ENCODE measurements at regions of chr5 and their contacts with region 1.

Region 1: GRCh38 chr5:90264689-90265544 is 144.6 kb downstream of the CETN3 start:
- DNase-seq: peak; percentile 70 to 77
- H3K4me3 ChIP-seq: no peak overlapping the region
- H3K4me3 Mint-ChIP-seq: no peak overlapping the region
- H3K27ac Mint-ChIP-seq: no peak overlapping the region
- H3K4me1 ChIP-seq: 0 out of 2 replicates have a peak, but pooled peaks cover 10% of the 10 kb centered on the region
- H3K4me1 Mint-ChIP-seq: no peaks in the 10 kb centered on the region
- H3K27me3 ChIP-seq: no peaks in the 10 kb centered on the region
- H3K27me3 Mint-ChIP-seq: no peaks in the 10 kb centered on the region
- CTCF ChIP-seq: peak; percentile 92 to 93

Region 2: GRCh38 chr5:89277816-89278215 is 987.1 kb before region 1 on chr5:
- CTCF ChIA-PET with region 1: no interaction called
- POLR2A ChIA-PET with region 1: no interaction called
- intact Hi-C with region 1: loop called (anchors 10 kb)
- DNase-seq: no peak
- H3K4me3 ChIP-seq: no peak overlapping the region
- H3K4me3 Mint-ChIP-seq: no peak overlapping the region
- H3K27ac Mint-ChIP-seq: no peak overlapping the region
- H3K4me1 ChIP-seq: peaks cover 15% of the 10 kb centered on the region; the same call in 1 of the 2 replicates
- H3K4me1 Mint-ChIP-seq: peaks cover 19% of the 10 kb centered on the region
- H3K27me3 ChIP-seq: no peaks in the 10 kb centered on the region
- H3K27me3 Mint-ChIP-seq: peaks cover 3% of the 10 kb centered on the region
- CTCF ChIP-seq: no peak

Region 3: GRCh38 chr5:89849830-89850512 is 414.9 kb before region 1 on chr5:
- CTCF ChIA-PET with region 1: no interaction called
- POLR2A ChIA-PET with region 1: no interaction called
- intact Hi-C with region 1: loop called (anchors 10 kb)
- DNase-seq: no peak
- H3K4me3 ChIP-seq: no peak overlapping the region
- H3K4me3 Mint-ChIP-seq: no peak overlapping the region
- H3K27ac Mint-ChIP-seq: no peak overlapping the region
- H3K4me1 ChIP-seq: peaks cover 7% of the 10 kb centered on the region; the same call in 1 of the 2 replicates
- H3K4me1 Mint-ChIP-seq: peaks cover 7% of the 10 kb centered on the region
- H3K27me3 ChIP-seq: no peaks in the 10 kb centered on the region
- H3K27me3 Mint-ChIP-seq: no peaks in the 10 kb centered on the region
- CTCF ChIP-seq: no peak

Region 4: GRCh38 chr5:90135779-90136378 is 129.0 kb before region 1 on chr5:
- CTCF ChIA-PET with region 1: no interaction called
- POLR2A ChIA-PET with region 1: no interaction called
- intact Hi-C with region 1: loop called (anchors 2 kb)
- DNase-seq: peak; percentile 13 to 39
- H3K4me3 ChIP-seq: no peak overlapping the region
- H3K4me3 Mint-ChIP-seq: no peak overlapping the region
- H3K27ac Mint-ChIP-seq: no peak overlapping the region
- H3K4me1 ChIP-seq: no peaks in the 10 kb centered on the region
- H3K4me1 Mint-ChIP-seq: no peaks in the 10 kb centered on the region
- H3K27me3 ChIP-seq: no peaks in the 10 kb centered on the region
- H3K27me3 Mint-ChIP-seq: no peaks in the 10 kb centered on the region
- CTCF ChIP-seq: peak; percentile 31 to 33

Region 5: DNA sequence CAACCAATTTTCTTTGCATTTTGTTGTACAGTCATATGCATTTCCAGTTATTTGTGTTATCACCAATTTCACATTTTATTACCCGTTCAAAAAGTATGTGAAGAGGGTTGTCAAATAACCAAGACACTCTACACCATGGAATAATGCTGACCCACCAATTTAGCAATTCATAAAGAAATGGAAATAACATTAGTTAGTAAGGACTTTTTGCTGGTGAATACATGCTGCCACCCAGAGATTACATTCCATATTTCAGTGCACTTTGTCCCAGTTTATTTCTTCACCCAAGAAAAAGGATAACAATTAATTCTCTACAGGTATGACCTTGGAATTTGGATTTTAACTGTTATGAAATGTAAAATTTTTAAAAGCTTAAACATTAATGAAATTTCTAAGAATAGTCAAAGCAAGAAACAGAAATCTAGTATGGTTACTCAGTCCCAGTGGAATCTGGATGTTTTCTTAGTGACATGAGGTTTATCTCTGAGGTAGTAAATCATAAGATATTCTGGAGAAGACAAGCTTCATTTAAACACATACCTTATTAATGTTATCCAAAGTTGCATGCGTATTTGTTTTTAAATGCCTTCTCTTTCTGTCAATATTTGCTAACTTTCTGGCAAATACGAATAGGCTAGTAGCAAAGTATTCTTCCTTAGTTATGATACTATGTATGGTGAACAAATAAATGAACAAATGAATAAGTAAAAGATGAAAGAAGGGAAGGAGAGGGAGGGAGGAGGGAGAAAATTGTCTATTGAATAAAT is 44.1 kb after region 1 on chr5:
- CTCF ChIA-PET with region 1: no interaction called
- POLR2A ChIA-PET with region 1: no interaction called
- intact Hi-C with region 1: loop called (anchors 1 kb)
- DNase-seq: peak in 1 of 2 experiments; percentile 52
- H3K4me3 ChIP-seq: no peak overlapping the region
- H3K4me3 Mint-ChIP-seq: no peak overlapping the region
- H3K27ac Mint-ChIP-seq: peak overlapping the region; percentile 59
- H3K4me1 ChIP-seq: peaks cover 18% of the 10 kb centered on the region
- H3K4me1 Mint-ChIP-seq: peaks cover 25% of the 10 kb centered on the region
- H3K27me3 ChIP-seq: no peaks in the 10 kb centered on the region
- H3K27me3 Mint-ChIP-seq: no peaks in the 10 kb centered on the region
- CTCF ChIP-seq: no peak

Region 6: DNA sequence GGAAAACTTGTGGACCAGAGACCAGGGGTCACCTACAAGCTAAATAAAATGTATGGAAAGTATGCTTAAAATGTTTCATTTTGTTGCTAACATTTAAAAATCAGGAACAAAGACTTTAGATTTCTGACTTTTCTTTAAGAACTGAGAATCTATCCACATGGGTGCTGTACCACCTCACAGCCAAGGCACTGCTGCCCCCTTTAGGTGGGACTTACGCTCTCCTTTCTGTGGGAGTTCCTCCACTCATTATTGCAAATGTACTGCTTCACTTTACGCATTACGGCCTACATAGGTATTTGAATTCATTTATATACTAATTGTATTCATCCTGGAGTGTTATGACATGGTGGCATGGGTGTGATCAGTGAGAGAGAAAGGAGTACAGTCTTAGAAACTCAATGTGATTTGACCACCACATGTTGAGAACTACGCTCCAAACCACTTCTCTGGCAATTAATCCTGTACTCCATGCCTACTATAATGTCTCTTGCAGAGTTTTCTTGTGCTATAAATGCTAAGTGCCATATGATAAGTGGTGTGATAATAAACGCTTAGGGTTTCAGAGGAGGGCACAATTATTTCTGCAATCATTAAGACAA is 169.3 kb after region 1 on chr5:
- CTCF ChIA-PET with region 1: no interaction called
- POLR2A ChIA-PET with region 1: no interaction called
- intact Hi-C with region 1: loop called (anchors 2 kb)
- DNase-seq: peak; percentile 55 to 77
- H3K4me3 ChIP-seq: no peak overlapping the region
- H3K4me3 Mint-ChIP-seq: no peak overlapping the region
- H3K27ac Mint-ChIP-seq: no peak overlapping the region
- H3K4me1 ChIP-seq: peaks cover 5% of the 10 kb centered on the region; the same call in 1 of the 2 replicates
- H3K4me1 Mint-ChIP-seq: peaks cover 6% of the 10 kb centered on the region
- H3K27me3 ChIP-seq: no peaks in the 10 kb centered on the region
- H3K27me3 Mint-ChIP-seq: peaks cover 10% of the 10 kb centered on the region
- CTCF ChIP-seq: peak; percentile 73 to 86